Activated CD4-positive, alpha-beta memory T cell treated with anti-CD3 and anti-CD28 coated beads, Interleukin-2, amount 10 ng/mL, durations not matched to agents 7 days and 5 days (primary cell): ENCODE measurements at regions of chr2 and their contacts with region 1.

Region 1: DNA sequence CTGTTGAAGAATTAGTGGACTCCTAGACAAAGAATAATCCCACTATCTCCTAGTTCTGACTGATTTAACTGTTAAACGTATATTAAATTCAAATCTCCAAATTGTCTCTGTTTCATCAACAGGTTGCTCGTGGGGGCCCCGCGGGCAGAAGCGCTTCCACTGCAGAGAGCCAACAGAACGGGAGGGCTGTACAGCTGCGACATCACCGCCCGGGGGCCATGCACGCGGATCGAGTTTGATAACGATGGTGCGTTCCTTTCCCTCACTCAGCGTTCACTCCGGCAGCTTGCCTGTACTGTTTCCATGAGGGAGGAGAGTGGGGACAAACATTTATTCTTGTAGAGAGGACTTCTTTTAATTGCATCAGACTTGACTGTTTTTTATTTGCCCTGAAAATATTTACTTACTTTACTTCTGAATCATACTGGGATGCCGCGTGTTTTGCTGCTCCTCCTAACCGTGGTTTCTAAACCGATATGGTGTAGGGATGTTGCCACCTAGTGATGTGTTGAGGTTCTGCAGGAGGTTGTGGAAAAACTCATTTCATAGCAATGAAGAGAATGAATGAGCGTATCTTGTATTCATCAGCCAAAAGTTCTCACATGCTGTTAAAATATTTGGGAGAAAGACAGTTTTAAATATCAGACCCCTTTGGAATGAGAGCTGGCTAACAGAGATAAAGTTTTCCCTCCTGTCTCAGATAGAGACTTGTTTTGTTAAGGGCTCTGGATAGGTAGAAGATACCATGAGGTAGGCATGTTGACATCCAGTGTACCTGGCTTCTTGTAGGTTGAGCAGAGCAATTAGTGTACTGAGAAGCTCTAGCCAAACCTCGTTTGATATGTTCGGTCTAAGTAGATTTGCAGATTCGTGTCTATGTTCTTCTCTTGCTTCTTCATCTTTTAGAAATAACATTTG is 38.3 kb downstream of the ITGA6 start:
- DNase-seq: peak; percentile 78
- H3K4me3 Mint-ChIP-seq: no peak overlapping the region
- H3K27ac Mint-ChIP-seq: peak overlapping the region; percentile 5
- H3K4me1 Mint-ChIP-seq: peaks cover 61% of the 10 kb centered on the region
- H3K27me3 Mint-ChIP-seq: peaks cover 3% of the 10 kb centered on the region

Region 2: DNA sequence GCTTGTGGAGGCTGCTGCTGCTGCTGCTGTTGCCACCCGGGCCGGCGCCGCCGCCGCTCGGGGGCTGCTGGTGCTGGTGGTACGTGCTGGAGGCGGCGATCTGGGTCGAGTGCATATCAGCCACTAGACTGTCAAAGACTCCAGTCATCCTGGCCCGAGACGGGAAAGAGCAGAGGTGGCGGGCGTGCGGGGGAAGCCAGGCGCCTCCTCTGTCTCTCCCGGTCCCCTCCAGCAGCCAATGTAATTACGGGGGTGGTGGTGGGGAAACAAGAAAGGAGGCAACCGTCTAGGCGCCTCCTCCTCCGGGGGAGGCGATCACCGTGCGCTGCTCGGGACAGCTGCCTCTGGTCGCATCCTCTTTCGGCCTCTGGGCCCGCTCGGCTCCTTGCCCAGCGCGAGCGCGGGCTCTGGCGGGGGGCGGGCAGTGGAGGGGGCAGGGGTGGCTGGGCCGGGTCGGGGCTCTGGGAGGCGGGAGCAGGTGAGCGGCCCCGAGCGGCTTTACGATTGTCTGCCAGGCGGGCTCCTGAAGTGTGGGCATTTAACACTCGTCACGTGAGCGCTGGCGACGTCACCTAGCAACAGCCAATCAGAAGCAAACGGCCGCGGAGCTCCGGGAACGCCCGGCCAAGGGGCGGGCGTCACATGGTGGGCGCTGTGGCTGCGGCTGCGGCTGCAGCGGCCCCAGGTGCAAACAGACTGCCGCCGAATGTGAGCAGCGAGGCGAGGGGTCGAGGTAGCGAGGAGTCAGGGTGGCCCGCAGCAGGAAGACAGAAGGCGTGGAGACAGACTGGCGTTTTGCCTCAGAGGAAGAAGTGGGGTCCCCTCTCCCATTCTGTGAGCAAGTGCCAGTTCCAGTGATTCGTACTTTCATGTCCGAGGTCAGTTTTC is 363.0 kb before region 1 on chr2 and contains the start of gene DLX2:
- CTCF ChIA-PET with region 1: interaction called, 64 read pairs
- POLR2A ChIA-PET with region 1: interaction called, 4 read pairs
- DNase-seq: peak; percentile 78
- H3K4me3 Mint-ChIP-seq: peak within 1 kb of the TSS; percentile 73
- H3K27ac Mint-ChIP-seq: no peak within 1 kb of the TSS
- H3K4me1 Mint-ChIP-seq: peaks cover 58% of the 10 kb centered on the region
- H3K27me3 Mint-ChIP-seq: peaks cover 80% of the 10 kb centered on the region
- total RNA-seq, gene DLX2: not detected

Region 3: GRCh38 chr2:172172513-172173173 is 293.0 kb before region 1 on chr2:
- CTCF ChIA-PET with region 1: interaction called, 97 read pairs
- POLR2A ChIA-PET with region 1: interaction called, 6 read pairs
- DNase-seq: peak; percentile 68
- H3K4me3 Mint-ChIP-seq: peak overlapping the region; percentile 54
- H3K27ac Mint-ChIP-seq: no peak overlapping the region
- H3K4me1 Mint-ChIP-seq: peaks cover 8% of the 10 kb centered on the region
- H3K27me3 Mint-ChIP-seq: peaks cover 34% of the 10 kb centered on the region

Region 4: DNA sequence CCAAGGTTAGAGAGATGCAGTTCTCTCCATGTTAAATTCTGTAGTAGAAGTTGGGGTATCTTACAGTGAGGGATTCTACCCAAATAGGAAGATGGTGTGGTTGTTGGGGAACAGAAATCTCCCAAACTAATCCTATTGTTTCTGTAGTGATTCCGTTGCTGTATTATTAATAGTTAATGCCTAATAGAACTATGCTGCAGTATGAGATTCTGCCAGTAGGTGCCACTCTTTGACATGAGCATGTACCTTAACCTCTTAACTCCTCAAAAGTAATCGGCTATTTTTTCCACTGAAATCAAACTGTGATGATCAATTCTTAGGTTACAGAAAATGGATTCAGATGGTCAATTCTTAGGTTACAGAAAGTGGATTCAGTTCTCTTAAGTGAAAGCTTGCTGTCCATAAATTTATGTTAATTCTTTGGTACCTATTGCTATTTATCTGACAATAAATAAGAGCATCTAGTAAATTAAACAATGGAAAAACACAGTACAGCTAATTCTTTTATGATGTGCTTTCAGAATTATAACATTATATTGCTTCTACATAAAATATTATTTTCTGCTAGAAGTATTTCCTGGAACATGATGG is 265.1 kb before region 1 on chr2:
- CTCF ChIA-PET with region 1: interaction called, 18 read pairs
- POLR2A ChIA-PET with region 1: no interaction called
- DNase-seq: peak; percentile 24
- H3K4me3 Mint-ChIP-seq: no peak overlapping the region
- H3K27ac Mint-ChIP-seq: no peak overlapping the region
- H3K4me1 Mint-ChIP-seq: peaks cover 19% of the 10 kb centered on the region
- H3K27me3 Mint-ChIP-seq: peaks cover 32% of the 10 kb centered on the region

Region 5: DNA sequence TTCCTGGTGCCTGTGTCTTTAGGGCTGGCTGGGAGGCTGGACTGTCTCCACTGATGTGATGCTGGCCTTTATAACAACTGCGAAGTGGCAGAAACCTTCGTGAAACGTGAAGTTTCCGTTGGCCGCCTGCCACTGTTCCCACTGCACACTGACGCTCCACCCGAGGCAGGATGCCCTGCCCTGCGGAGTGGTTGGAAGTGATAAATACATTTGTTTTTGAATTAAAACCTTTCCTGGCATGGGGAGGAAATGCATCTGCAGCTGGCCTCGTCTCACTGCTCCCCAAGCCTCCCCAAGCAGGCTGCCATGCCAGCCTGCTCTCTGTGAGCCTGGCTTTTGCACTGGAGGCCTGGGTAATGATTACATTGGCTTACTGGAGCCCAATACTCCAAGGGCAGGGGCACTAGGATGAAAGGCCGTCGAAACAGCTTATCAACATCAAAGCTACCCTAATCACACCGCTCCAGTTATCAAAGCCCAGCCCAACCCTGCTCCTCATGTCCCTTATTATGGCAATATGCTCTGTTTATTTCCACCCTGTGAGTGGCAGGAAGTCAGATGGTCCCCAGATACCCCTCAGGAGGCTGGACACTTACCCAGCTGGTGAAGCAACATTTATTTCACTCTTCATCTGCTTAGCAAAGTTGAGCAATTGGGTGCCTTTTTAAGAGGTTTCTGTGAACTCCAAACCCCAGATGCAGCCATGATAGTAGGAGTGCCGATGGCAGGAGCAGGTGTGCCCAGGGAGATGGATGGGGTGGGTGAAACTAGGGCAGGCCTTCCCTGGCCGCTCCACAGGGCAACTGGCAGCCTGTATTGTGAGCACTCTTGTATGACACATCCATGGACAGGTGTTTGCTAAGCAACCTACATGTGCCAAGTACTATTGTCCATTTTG is 135.7 kb before region 1 on chr2:
- CTCF ChIA-PET with region 1: no interaction called
- POLR2A ChIA-PET with region 1: no interaction called
- DNase-seq: no peak
- H3K4me3 Mint-ChIP-seq: no peak overlapping the region
- H3K27ac Mint-ChIP-seq: no peak overlapping the region
- H3K4me1 Mint-ChIP-seq: no peaks in the 10 kb centered on the region
- H3K27me3 Mint-ChIP-seq: no peaks in the 10 kb centered on the region

Region 6: DNA sequence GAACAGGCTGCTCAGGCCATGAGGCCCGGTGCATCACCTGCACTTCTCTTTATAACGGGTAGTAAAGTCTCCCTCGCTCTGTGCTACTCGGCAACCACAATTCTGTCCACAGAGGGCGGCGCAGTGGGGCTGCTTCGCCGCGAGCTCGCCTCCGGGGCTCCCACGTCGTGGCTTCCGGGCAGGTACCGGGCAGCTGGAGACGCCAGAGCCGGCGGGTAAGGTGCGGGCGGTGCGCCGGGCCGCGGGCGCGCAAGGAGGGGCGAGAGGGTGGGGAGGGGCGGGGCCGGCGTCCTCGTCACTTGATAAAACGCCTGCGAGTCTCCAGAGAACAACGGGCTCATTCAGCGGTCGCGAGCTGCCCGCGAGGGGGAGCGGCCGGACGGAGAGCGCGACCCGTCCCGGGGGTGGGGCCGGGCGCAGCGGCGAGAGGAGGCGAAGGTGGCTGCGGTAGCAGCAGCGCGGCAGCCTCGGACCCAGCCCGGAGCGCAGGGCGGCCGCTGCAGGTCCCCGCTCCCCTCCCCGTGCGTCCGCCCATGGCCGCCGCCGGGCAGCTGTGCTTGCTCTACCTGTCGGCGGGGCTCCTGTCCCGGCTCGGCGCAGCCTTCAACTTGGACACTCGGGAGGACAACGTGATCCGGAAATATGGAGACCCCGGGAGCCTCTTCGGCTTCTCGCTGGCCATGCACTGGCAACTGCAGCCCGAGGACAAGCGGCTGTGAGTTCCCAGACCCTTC is 38.3 kb before region 1 on chr2 and contains the start of gene ITGA6:
- CTCF ChIA-PET with region 1: interaction called, 94 read pairs
- POLR2A ChIA-PET with region 1: interaction called, 34 read pairs
- DNase-seq: peak; percentile 74
- H3K4me3 Mint-ChIP-seq: peak within 1 kb of the TSS; percentile 73
- H3K27ac Mint-ChIP-seq: no peak within 1 kb of the TSS
- H3K4me1 Mint-ChIP-seq: peaks cover 29% of the 10 kb centered on the region
- H3K27me3 Mint-ChIP-seq: peaks cover 62% of the 10 kb centered on the region
- total RNA-seq, gene ITGA6: 17.7 to 18.0 TPM

Region 7: DNA sequence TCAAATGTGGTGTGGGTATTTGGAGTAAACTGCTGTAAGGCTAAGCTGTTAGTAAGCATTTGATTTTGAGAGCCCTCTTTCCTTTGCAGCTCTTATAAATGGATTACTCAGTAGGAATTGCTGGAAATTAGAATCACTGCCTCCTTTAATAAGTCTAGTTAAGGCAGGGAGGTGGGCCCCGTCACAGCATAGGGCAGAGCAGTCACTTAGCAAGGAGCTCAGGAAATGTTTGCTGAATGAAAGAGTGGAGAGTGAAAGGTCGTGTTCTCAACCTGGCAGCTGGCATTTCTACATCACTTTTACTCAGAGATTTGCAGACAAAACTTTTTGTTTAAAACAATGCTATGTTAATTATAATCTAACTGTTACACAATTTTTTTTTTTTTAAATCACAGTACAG is 12.8 kb before region 1 on chr2:
- CTCF ChIA-PET with region 1: interaction called, 41 read pairs
- POLR2A ChIA-PET with region 1: interaction called, 15 read pairs
- DNase-seq: no peak
- H3K4me3 Mint-ChIP-seq: no peak overlapping the region
- H3K27ac Mint-ChIP-seq: no peak overlapping the region
- H3K4me1 Mint-ChIP-seq: peaks cover 15% of the 10 kb centered on the region
- H3K27me3 Mint-ChIP-seq: peaks cover 2% of the 10 kb centered on the region

Region 8: GRCh38 chr2:172525606-172526005 is 59.9 kb after region 1 on chr2:
- CTCF ChIA-PET with region 1: no interaction called
- POLR2A ChIA-PET with region 1: no interaction called
- DNase-seq: no peak
- H3K4me3 Mint-ChIP-seq: no peak overlapping the region
- H3K27ac Mint-ChIP-seq: no peak overlapping the region
- H3K4me1 Mint-ChIP-seq: no peaks in the 10 kb centered on the region
- H3K27me3 Mint-ChIP-seq: no peaks in the 10 kb centered on the region

Region 9: DNA sequence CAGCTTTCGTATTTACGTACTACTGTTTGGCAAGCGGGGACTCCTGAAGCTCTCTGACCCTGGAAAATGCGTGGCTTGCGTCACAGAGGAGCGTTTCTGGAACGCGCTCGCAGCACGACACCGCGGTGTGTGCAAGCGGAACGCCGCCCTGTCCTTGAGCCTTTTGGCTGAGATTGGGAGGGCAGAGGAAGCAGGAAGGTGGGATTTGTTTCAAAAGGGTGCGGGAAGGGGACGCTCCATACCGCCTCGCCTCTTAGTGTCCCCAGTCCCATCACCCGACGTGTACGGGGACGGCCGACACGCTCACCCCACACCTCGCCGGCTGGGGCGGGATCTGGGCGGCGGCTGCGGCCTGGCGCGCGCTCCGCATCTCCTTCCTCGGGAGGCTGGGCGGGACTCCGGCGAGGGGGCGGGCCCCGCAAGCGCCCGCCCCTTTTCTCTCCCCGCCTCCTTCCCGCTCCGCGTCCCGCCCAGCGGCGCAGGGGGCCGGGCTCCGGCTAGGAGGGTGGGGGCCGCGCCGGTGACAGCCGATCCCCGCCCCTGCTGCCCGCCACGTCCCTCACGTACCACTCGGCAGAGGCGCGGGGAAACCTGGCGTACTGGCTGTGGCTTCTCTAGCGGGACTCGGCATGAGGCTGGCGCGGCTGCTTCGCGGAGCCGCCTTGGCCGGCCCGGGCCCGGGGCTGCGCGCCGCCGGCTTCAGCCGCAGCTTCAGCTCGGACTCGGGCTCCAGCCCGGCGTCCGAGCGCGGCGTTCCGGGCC is 90.0 kb after region 1 on chr2 and contains the start of gene PDK1:
- CTCF ChIA-PET with region 1: interaction called, 3 read pairs
- POLR2A ChIA-PET with region 1: interaction called, 11 read pairs
- DNase-seq: peak; percentile 93
- H3K4me3 Mint-ChIP-seq: peak within 1 kb of the TSS; percentile 89
- H3K27ac Mint-ChIP-seq: peak within 1 kb of the TSS; percentile 84
- H3K4me1 Mint-ChIP-seq: peaks cover 52% of the 10 kb centered on the region
- H3K27me3 Mint-ChIP-seq: peaks cover 2% of the 10 kb centered on the region
- total RNA-seq, gene PDK1: 30.7 to 38.5 TPM